ENCODE measurements at regions of chr6 and their contacts with region 1.

Region 1: DNA sequence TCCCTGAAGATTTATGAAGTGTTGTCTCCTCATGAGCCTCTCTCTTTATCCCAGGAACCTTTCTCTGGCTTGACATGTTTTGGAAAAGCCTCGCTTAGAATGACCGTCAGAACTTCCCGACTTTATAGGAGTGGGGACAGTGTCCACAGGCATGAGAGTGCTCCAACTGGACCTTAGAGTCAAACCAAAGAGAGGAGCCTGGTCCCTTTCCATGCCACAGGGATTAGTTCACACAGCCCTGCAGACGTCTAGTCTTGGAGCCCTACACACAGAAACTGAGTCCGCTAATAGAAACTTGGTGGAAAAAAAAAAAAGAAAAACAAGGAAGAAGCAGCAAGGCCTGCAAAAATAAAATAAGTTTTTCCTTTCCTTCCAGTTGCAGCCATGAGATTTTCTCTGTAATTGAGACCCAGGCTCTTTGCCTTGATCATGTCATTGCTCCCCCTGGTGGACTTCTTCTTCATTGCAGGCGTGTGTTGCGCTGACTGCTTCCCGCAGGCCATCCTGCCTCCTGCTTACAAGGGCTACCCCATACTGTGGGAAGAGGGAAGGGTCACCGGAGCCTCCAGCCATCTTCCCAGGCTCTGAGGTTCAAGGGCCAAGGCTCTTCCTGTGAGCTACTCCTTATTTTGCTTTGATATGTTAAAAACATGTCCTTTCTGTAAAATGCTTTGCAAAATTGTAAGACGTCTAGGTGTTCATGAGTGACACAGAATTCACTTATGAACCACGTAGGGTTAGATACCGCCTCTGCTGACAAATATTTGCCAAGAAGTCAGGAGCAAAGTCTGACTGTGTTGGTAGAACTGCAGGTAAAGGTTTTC is 201.0 kb downstream of the UST start:
- DNase-seq: peak; percentile 90
- H3K4me3 ChIP-seq: no peak overlapping the region
- H3K27ac ChIP-seq: no peak overlapping the region
- H3K4me1 ChIP-seq: no peaks in the 10 kb centered on the region
- H3K27me3 ChIP-seq: no peaks in the 10 kb centered on the region
- CTCF ChIP-seq: peak; percentile 93

Region 2: DNA sequence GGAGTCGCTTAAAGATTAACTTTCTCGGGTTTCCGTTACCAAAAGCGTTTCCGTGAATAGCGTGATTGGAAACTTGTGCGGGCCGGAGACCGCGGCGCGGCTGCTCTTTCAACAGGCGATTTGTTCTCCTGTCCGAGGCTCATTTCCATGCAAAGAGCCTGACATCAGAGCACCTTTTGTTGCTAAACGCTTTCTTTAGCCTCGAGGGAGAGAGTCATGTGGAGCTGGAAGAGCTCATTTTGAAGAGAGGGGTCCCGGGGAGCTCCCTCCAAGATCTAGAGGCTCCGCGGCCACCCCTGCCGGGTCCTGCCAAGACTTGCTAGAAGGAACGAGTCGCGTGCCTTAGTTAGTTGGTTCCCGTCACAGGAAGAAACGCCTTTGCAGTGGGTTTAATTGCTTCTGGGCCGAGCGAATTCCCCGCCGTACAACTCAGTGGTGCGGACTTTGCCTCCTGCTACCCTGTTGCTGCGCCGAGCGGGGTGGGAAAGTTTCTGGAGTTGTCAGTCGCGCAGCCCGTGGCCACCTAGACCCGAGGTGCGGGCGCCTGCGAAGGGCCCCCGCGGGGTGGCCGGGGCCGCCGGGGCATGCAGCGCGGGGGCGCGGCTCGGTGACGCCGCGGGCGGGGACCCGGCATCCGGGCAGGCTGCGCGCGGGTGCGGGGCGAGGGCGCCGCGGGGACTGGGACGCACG is 605.3 kb before region 1 on chr6 and contains the start of gene SASH1:
- intact Hi-C with region 1: no loop called
- DNase-seq: peak; percentile 75
- H3K4me3 ChIP-seq: peak within 1 kb of the TSS; percentile 52
- H3K27ac ChIP-seq: peak within 1 kb of the TSS; percentile 84
- H3K4me1 ChIP-seq: no peaks in the 10 kb centered on the region
- H3K27me3 ChIP-seq: no peaks in the 10 kb centered on the region
- CTCF ChIP-seq: no peak
- total RNA-seq, gene SASH1: 14.9 to 16.4 TPM

Region 3: DNA sequence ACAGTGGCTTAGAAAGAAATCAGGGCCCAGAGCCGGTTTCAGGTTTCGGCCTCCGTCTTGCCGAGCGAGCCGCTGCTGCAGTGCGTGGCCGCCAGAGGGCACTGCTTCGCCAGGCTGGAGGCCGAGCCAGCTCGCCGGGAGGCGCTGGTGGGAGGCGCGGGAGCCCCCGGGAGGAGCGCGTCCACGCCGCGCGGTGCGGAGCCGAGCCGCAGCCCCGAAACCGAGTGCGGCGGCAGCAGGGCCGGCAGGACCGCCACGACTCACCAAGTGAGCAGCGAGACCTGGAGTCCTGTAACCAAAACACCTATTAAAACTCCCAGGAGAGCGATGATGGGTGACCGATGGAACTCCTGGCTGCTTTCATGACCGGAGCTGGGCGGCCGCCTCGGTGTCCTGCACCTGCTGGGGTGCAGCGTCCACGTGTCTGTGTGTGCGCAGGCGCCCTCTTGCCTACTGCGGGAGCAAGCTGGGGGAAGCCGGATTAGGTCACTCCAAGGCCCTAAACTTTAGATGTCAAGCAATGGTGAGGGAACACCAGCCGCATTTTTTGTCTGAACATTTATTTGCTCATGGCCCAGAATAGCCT is 387.9 kb before region 1 on chr6:
- intact Hi-C with region 1: loop called (anchors 5 kb)
- DNase-seq: peak; percentile 66
- H3K4me3 ChIP-seq: peak overlapping the region; percentile 31
- H3K27ac ChIP-seq: no peak overlapping the region
- H3K4me1 ChIP-seq: no peaks in the 10 kb centered on the region
- H3K27me3 ChIP-seq: no peaks in the 10 kb centered on the region
- CTCF ChIP-seq: peak; percentile 96

Region 4: GRCh38 chr6:148578245-148578732 is 369.5 kb before region 1 on chr6:
- intact Hi-C with region 1: loop called (anchors 5 kb)
- DNase-seq: peak; percentile 47
- H3K4me3 ChIP-seq: no peak overlapping the region
- H3K27ac ChIP-seq: no peak overlapping the region
- H3K4me1 ChIP-seq: no peaks in the 10 kb centered on the region
- H3K27me3 ChIP-seq: no peaks in the 10 kb centered on the region
- CTCF ChIP-seq: peak; percentile 67

Region 5: DNA sequence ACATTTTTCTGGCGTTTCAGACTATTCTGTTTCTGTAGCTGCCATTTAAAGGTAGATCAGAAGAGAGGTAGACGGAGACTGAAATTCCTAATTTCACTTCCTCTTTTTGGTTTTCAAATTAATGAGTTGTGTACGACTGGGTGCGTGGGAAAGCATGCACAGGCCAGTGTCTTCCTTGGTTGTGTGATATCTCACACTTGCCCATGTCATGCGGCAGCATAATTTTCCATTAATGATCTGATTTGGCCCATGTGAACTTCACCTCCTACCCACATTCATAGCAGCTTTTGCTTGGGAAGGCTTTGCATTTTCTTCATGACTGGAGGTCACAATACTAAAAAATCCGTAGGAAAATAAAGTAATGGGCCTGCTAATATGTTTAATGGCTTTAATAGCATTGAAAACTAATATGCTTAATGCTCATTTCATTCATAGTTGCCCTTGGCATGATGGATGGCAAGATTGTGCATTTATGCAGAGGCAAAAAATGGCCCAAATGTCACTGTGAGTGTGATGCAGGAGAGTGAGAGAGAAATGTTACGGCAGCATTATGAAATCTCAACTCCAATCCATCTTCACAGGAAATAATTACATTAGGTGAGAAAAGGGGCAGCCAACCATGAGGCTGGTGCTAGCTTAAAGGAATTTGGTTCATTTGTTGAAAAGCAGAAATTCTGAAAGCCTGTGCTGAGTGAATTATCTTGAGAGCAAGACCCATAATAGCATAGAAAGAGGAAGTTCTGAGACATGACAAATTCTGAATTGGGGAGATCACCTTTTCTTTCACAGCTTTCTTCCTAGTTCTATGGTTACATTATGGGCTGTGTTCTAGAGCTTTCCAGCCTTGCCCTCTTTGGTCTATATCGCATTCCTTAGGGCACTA is 270.0 kb before region 1 on chr6:
- intact Hi-C with region 1: no loop called
- DNase-seq: no peak
- H3K4me3 ChIP-seq: no peak overlapping the region
- H3K27ac ChIP-seq: no peak overlapping the region
- H3K4me1 ChIP-seq: no peaks in the 10 kb centered on the region
- H3K27me3 ChIP-seq: no peaks in the 10 kb centered on the region
- CTCF ChIP-seq: no peak

Region 6: DNA sequence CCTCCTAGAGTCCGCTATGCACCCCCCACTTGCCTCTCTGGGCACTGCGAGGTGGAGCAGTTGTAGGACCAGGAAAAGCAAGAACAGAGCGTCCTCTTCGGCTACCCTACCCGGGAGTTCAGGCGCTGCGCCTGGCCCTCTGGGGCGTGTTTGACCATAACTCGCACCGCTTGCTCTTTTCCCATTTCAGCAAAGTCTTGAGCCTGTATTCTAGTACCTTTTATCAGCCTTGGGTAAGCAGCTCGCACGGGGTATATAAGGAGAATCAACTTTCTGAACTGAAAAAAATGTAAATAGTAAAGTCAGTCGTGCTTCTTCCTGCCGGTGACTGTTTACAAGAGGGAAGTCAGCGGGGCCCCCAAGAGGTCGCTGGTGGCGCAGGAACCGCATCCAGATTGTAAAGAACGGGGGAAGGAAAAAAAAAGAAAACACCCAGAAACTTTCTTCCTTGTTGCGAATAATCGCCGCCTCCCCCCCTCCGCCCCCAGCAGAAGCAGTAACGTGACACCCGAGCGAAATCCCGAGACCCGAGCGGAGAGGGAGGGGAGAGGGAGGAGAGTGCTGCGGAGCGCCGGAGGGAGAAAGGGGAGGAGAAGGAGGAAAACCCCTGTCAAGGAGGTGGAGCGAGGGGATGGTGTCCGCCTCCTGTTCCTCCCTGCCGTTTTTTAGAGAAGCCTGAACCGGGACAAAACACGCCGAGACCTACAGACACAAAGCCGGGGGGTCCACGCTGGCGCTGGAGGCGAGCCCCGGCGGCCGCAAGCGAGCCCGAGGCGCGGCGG is 201.3 kb before region 1 on chr6 and contains the start of gene UST:
- intact Hi-C with region 1: loop called (anchors 10 kb)
- DNase-seq: peak; percentile 75
- H3K4me3 ChIP-seq: peak within 1 kb of the TSS; percentile 61
- H3K27ac ChIP-seq: peak within 1 kb of the TSS; percentile 71
- H3K4me1 ChIP-seq: no peaks in the 10 kb centered on the region
- H3K27me3 ChIP-seq: peaks cover 21% of the 10 kb centered on the region
- CTCF ChIP-seq: no peak
- total RNA-seq, gene UST: 1.1 to 2.7 TPM

Measured in colonic mucosa (tissue), 4 donors.